Common myeloid progenitor, CD34-positive (primary cell): ENCODE measurements at regions of chr15 and their contacts with region 1.

Region 1: DNA sequence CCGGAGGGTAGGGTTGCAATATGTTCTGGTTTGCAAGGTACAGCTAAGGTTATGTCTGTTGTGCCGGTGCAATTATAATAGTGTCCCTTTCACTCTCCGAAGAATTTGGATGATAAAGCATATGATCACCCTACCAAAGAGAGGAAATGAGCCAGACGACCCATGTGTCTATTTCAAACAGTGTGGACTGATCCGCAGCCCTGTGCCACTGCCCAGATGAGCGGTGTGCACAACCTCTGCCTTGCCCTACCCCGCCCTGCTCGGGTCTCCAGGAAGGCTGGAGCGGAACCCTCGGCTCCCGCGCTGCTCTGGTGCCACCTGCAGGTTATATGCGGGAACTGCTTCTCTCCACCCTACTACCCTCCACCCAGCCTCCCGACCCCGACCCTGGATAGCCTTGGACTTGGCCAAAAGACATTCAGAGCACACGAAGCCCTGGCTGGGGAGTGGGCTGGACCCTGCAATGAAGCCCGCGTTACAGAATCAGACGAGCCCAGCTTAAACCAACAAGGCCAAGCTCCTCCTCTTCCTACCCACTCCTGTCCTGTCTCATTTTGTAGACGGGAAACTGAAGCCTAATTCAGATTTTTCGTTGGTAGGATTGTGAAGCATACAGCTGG is 68.4 kb upstream of the CHRNB4 start:
- DNase-seq: peak; percentile 46 to 61 (median 60)
- H3K4me3 ChIP-seq: peak overlapping the region in 2 of 7 experiments; percentile 4 to 49
- H3K27ac ChIP-seq: no peak overlapping the region
- H3K4me1 ChIP-seq: peaks cover 0 to 6% (median 2%) of the 10 kb centered on the region in 4 experiments
- H3K27me3 ChIP-seq: peaks cover 0 to 18% (median 5%) of the 10 kb centered on the region in 5 experiments

Region 2: GRCh38 chr15:78618490-78618934 is 90.9 kb before region 1 on chr15:
- CTCF ChIA-PET with region 1: interaction called, 27 read pairs
- POLR2A ChIA-PET with region 1: interaction called, 3 read pairs
- DNase-seq: peak; percentile 80 to 90 (median 84)
- H3K4me3 ChIP-seq: no peak overlapping the region
- H3K27ac ChIP-seq: no peak overlapping the region
- H3K4me1 ChIP-seq: peaks cover 0 to 17% (median 14%) of the 10 kb centered on the region in 4 experiments
- H3K27me3 ChIP-seq: peaks cover 5 to 41% (median 18%) of the 10 kb centered on the region in 5 experiments